Activated CD8-positive, alpha-beta T cell treated with anti-CD3 and anti-CD28 coated beads for 36 hours (primary cell): ENCODE measurements at regions of chr9 and their contacts with region 1.

Region 1: GRCh38 chr9:84781458-84781857 is 111.9 kb downstream of the NTRK2 start:
- DNase-seq: peak; percentile 43
- ATAC-seq: no peak
- H3K4me3 Mint-ChIP-seq: no peak overlapping the region
- H3K27ac Mint-ChIP-seq: no peak overlapping the region
- H3K4me1 Mint-ChIP-seq: no peaks in the 10 kb centered on the region
- H3K27me3 Mint-ChIP-seq: peaks cover 10% of the 10 kb centered on the region
- CTCF ChIP-seq: peak; percentile 33

Region 2: GRCh38 chr9:84397151-84397728 is 384.2 kb before region 1 on chr9:
- CTCF ChIA-PET with region 1: interaction called, 4 read pairs
- POLR2A ChIA-PET with region 1: no interaction called
- intact Hi-C with region 1: loop called (anchors 10 kb)
- DNase-seq: peak; percentile 68
- ATAC-seq: peak; percentile 74
- H3K4me3 Mint-ChIP-seq: no peak overlapping the region
- H3K27ac Mint-ChIP-seq: no peak overlapping the region
- H3K4me1 Mint-ChIP-seq: no peaks in the 10 kb centered on the region
- H3K27me3 Mint-ChIP-seq: peaks cover 2% of the 10 kb centered on the region
- CTCF ChIP-seq: peak; percentile 82

Region 3: DNA sequence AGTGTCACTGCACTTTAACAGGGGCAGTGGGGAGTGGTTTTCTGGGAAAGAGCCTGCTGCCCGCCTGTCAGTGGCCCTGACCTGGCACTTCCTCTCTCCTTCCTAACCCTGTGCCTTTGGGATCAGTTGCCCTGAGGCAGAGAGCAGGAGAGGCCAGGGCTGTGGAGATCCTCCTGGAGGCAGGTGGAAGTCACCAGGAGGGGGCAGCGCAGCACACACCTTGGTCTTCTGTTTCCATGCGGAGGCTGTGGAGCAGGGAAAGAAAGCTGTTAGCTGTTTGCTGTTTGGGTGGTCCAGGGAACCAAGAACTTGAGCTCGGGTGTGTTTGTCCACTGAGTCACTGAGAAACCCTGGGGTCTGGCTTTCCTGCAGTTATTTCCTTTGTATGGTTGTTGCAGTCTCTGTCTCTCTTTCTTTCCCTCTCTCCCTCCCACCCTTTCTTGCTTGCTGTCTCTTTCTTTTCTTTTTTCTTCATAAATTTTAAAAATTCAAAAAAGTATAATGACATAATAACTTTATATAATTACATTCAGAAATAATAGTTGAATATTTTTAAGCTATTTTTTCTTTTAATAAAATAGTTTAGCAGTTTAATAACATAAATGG is 83.8 kb before region 1 on chr9:
- CTCF ChIA-PET with region 1: interaction called, 19 read pairs
- POLR2A ChIA-PET with region 1: no interaction called
- intact Hi-C with region 1: no loop called
- DNase-seq: peak; percentile 70
- ATAC-seq: peak; percentile 37
- H3K4me3 Mint-ChIP-seq: no peak overlapping the region
- H3K27ac Mint-ChIP-seq: no peak overlapping the region
- H3K4me1 Mint-ChIP-seq: no peaks in the 10 kb centered on the region
- H3K27me3 Mint-ChIP-seq: peaks cover 16% of the 10 kb centered on the region
- CTCF ChIP-seq: peak; percentile 53

Region 4: GRCh38 chr9:84736081-84736480 is 45.4 kb before region 1 on chr9:
- CTCF ChIA-PET with region 1: no interaction called
- POLR2A ChIA-PET with region 1: no interaction called
- intact Hi-C with region 1: no loop called
- DNase-seq: no peak
- ATAC-seq: no peak
- H3K4me3 Mint-ChIP-seq: no peak overlapping the region
- H3K27ac Mint-ChIP-seq: no peak overlapping the region
- H3K4me1 Mint-ChIP-seq: no peaks in the 10 kb centered on the region
- H3K27me3 Mint-ChIP-seq: no peaks in the 10 kb centered on the region
- CTCF ChIP-seq: no peak